ENCODE measurements at regions of chr17 and their contacts with region 1.

Region 1: GRCh38 chr17:28416703-28417311 is 10.8 kb upstream of the SLC46A1 start:
- DNase-seq: peak; percentile 87 to 89
- H3K4me3 ChIP-seq: no peak overlapping the region
- H3K4me3 Mint-ChIP-seq: no peak overlapping the region
- H3K27ac Mint-ChIP-seq: peak overlapping the region; percentile 48
- H3K4me1 ChIP-seq: peaks cover 17% of the 10 kb centered on the region
- H3K4me1 Mint-ChIP-seq: peaks cover 17% of the 10 kb centered on the region
- H3K27me3 ChIP-seq: no peaks in the 10 kb centered on the region
- H3K27me3 Mint-ChIP-seq: no peaks in the 10 kb centered on the region
- CTCF ChIP-seq: peak; percentile 92 to 99

Region 2: GRCh38 chr17:28357061-28357900 is 59.5 kb before region 1 on chr17 and contains the start of gene POLDIP2:
- CTCF ChIA-PET with region 1: interaction called, 11 read pairs
- POLR2A ChIA-PET with region 1: interaction called, 5 read pairs
- intact Hi-C with region 1: no loop called
- DNase-seq: peak; percentile 99 to 100
- H3K4me3 ChIP-seq: peak within 1 kb of the TSS; percentile 78
- H3K4me3 Mint-ChIP-seq: peak within 1 kb of the TSS; percentile 90
- H3K27ac Mint-ChIP-seq: peak within 1 kb of the TSS; percentile 96
- H3K4me1 ChIP-seq: peaks cover 15% of the 10 kb centered on the region
- H3K4me1 Mint-ChIP-seq: peaks cover 22% of the 10 kb centered on the region
- H3K27me3 ChIP-seq: no peaks in the 10 kb centered on the region
- H3K27me3 Mint-ChIP-seq: no peaks in the 10 kb centered on the region
- CTCF ChIP-seq: peak in 1 of 2 experiments; percentile 15
- total RNA-seq, gene POLDIP2: 257 and 265 TPM in 2 replicates

Region 3: GRCh38 chr17:28384281-28385036 is 32.3 kb before region 1 on chr17:
- CTCF ChIA-PET with region 1: interaction called, 11 read pairs
- POLR2A ChIA-PET with region 1: no interaction called
- intact Hi-C with region 1: no loop called
- DNase-seq: peak; percentile 83 to 86
- H3K4me3 ChIP-seq: peak overlapping the region; percentile 52
- H3K4me3 Mint-ChIP-seq: peak overlapping the region; percentile 89
- H3K27ac Mint-ChIP-seq: peak overlapping the region; percentile 18
- H3K4me1 ChIP-seq: peaks cover 31% of the 10 kb centered on the region
- H3K4me1 Mint-ChIP-seq: peaks cover 17% of the 10 kb centered on the region
- H3K27me3 ChIP-seq: no peaks in the 10 kb centered on the region
- H3K27me3 Mint-ChIP-seq: no peaks in the 10 kb centered on the region
- CTCF ChIP-seq: no peak

Region 4: GRCh38 chr17:28405632-28406472 is 11.0 kb before region 1 on chr17 and contains the start of gene SLC46A1:
- CTCF ChIA-PET with region 1: interaction called, 40 read pairs
- POLR2A ChIA-PET with region 1: no interaction called
- intact Hi-C with region 1: loop called (anchors 1 kb)
- DNase-seq: peak; percentile 96 to 97
- H3K4me3 ChIP-seq: peak within 1 kb of the TSS; percentile 78
- H3K4me3 Mint-ChIP-seq: peak within 1 kb of the TSS; percentile 90
- H3K27ac Mint-ChIP-seq: peak within 1 kb of the TSS; percentile 72
- H3K4me1 ChIP-seq: peaks cover 56% of the 10 kb centered on the region
- H3K4me1 Mint-ChIP-seq: peaks cover 31% of the 10 kb centered on the region
- H3K27me3 ChIP-seq: no peaks in the 10 kb centered on the region
- H3K27me3 Mint-ChIP-seq: no peaks in the 10 kb centered on the region
- CTCF ChIP-seq: no peak
- total RNA-seq, gene SLC46A1: 114 and 128 TPM in 2 replicates

Region 5: GRCh38 chr17:28475151-28475900 is 58.5 kb after region 1 on chr17:
- CTCF ChIA-PET with region 1: interaction called, 10 read pairs
- POLR2A ChIA-PET with region 1: no interaction called
- intact Hi-C with region 1: loop called (anchors 1 kb)
- DNase-seq: peak; percentile 84 to 87
- H3K4me3 ChIP-seq: no peak overlapping the region
- H3K4me3 Mint-ChIP-seq: peak overlapping the region; percentile 47
- H3K27ac Mint-ChIP-seq: peak overlapping the region; percentile 60
- H3K4me1 ChIP-seq: peaks cover 76% of the 10 kb centered on the region
- H3K4me1 Mint-ChIP-seq: peaks cover 57% of the 10 kb centered on the region
- H3K27me3 ChIP-seq: no peaks in the 10 kb centered on the region
- H3K27me3 Mint-ChIP-seq: no peaks in the 10 kb centered on the region
- CTCF ChIP-seq: no peak

Region 6: DNA sequence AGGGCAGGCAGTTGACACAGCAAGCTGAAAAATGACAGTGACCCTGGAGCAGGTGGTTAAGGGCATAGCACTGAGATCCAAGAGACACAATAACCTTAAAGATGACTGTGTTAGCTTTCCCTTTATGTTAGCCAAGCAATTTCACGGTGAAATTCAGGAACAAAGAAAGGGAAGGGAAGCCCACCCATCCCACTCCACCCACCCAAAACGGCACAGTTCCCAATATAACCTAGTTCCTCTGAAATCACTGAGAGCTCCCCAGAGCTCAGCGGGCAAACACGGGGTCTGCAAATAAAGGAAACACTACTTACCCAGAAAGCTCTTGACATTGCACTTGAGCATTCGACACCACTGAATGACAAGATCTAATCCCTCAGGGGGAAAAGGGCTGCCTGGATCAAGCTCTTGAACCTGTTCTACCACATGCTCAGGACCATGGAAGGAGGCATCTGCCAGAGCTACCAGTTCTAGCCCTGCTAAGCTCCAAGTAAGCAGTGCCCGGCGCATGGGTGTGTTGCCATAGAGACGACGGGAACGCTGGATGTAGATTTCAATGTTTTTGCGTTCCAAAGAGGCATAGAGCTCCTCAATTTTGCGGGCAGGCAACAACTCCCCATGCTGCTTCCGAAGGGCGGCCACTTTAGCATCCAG is 217.5 kb after region 1 on chr17:
- CTCF ChIA-PET with region 1: no interaction called
- POLR2A ChIA-PET with region 1: no interaction called
- intact Hi-C with region 1: no loop called
- DNase-seq: no peak
- H3K4me3 ChIP-seq: no peak overlapping the region
- H3K4me3 Mint-ChIP-seq: no peak overlapping the region
- H3K27ac Mint-ChIP-seq: no peak overlapping the region
- H3K4me1 ChIP-seq: no peaks in the 10 kb centered on the region
- H3K4me1 Mint-ChIP-seq: no peaks in the 10 kb centered on the region
- H3K27me3 ChIP-seq: no peaks in the 10 kb centered on the region
- H3K27me3 Mint-ChIP-seq: no peaks in the 10 kb centered on the region
- CTCF ChIP-seq: no peak

Measured in Caco-2 (cell line).